ENCODE measurements at regions of chr10 and their contacts with region 1.

Region 1: GRCh38 chr10:99845837-99846382 is 63.5 kb downstream of the ABCC2 start:
- DNase-seq: peak in 8 of 10 donors; percentile 56 to 88 (median 68)
- H3K4me3 ChIP-seq: peak overlapping the region in 56 of 59 donors; percentile 1 to 60 (median 44)
- H3K27ac ChIP-seq: peak overlapping the region in 38 of 59 donors; percentile 12 to 85 (median 54)
- H3K27me3 ChIP-seq: no peaks in the 10 kb centered on the region
- CTCF ChIP-seq: peak; percentile 88 to 99 (median 96)

Region 2: GRCh38 chr10:100009793-100010676 is 164.1 kb after region 1 on chr10 and contains the start of gene DNMBP:
- intact Hi-C with region 1: loop called in 1 of 2 experiments (anchors 10 kb)
- DNase-seq: peak; percentile 24 to 80 (median 50)
- H3K4me3 ChIP-seq: peak within 1 kb of the TSS; percentile 56 to 92 (median 80)
- H3K27ac ChIP-seq: peak within 1 kb of the TSS in 47 of 59 donors; percentile 0 to 89 (median 67)
- H3K27me3 ChIP-seq: no peaks in the 10 kb centered on the region
- CTCF ChIP-seq: peak in 54 of 56 donors; percentile 27 to 72 (median 53)
- total RNA-seq, gene DNMBP: 5.3 to 14.0 (median 9.2) TPM

Region 3: GRCh38 chr10:100046021-100046486 is 200.1 kb after region 1 on chr10:
- intact Hi-C with region 1: loop called (anchors 1 to 5 kb)
- DNase-seq: peak; percentile 71 to 88 (median 81)
- H3K4me3 ChIP-seq: peak overlapping the region in 1 of 59 donors; percentile 15
- H3K27ac ChIP-seq: peak overlapping the region in 1 of 59 donors; percentile 31
- H3K27me3 ChIP-seq: no peaks in the 10 kb centered on the region
- CTCF ChIP-seq: peak; percentile 87 to 98 (median 96)